Vagina (tissue), 2 donors: ENCODE measurements at regions of chr11 and their contacts with region 1.

Region 1: GRCh38 chr11:46238967-46239800 is 38.3 kb upstream of the CREB3L1 start:
- DNase-seq: peak in 1 of 2 donors; percentile 91
- H3K4me3 ChIP-seq: peak overlapping the region; percentile 54 to 66
- H3K27ac ChIP-seq: peak overlapping the region; percentile 86
- H3K4me1 ChIP-seq: peaks cover 34% of the 10 kb centered on the region
- H3K27me3 ChIP-seq: no peaks in the 10 kb centered on the region
- CTCF ChIP-seq: peak; percentile 96 to 99 (median 98)
- POLR2A ChIP-seq: no peak

Region 2: GRCh38 chr11:46278387-46279125 is 39.4 kb after region 1 on chr11:
- intact Hi-C with region 1: loop called (anchors 5 kb)
- DNase-seq: no peak
- H3K4me3 ChIP-seq: peak overlapping the region; percentile 63 to 64
- H3K27ac ChIP-seq: peak overlapping the region; percentile 93
- H3K4me1 ChIP-seq: peaks cover 78% of the 10 kb centered on the region
- H3K27me3 ChIP-seq: no peaks in the 10 kb centered on the region
- CTCF ChIP-seq: peak; percentile 14 to 30 (median 14)
- POLR2A ChIP-seq: no peak

Region 3: GRCh38 chr11:46290598-46291309 is 51.6 kb after region 1 on chr11:
- intact Hi-C with region 1: loop called (anchors 5 kb)
- DNase-seq: no peak
- H3K4me3 ChIP-seq: no peak overlapping the region
- H3K27ac ChIP-seq: peak overlapping the region; percentile 89
- H3K4me1 ChIP-seq: peaks cover 66% of the 10 kb centered on the region
- H3K27me3 ChIP-seq: no peaks in the 10 kb centered on the region
- CTCF ChIP-seq: no peak
- POLR2A ChIP-seq: no peak

Region 4: GRCh38 chr11:46308631-46309419 is 69.6 kb after region 1 on chr11:
- intact Hi-C with region 1: loop called (anchors 2 kb)
- DNase-seq: no peak
- H3K4me3 ChIP-seq: no peak overlapping the region
- H3K27ac ChIP-seq: no peak overlapping the region
- H3K4me1 ChIP-seq: no peaks in the 10 kb centered on the region
- H3K27me3 ChIP-seq: no peaks in the 10 kb centered on the region
- CTCF ChIP-seq: peak; percentile 85 to 90 (median 86)
- POLR2A ChIP-seq: no peak